ENCODE measurements at regions of chr12 and their contacts with region 1.

Region 1: GRCh38 chr12:6607751-6608591 is 792 bp upstream of the CHD4 start:
- DNase-seq: peak; percentile 64
- H3K4me3 ChIP-seq: no peak overlapping the region
- H3K27ac ChIP-seq: peak overlapping the region; percentile 57
- H3K4me1 ChIP-seq: peaks cover 56% of the 10 kb centered on the region
- CTCF ChIP-seq: no peak

Region 2: GRCh38 chr12:6570264-6570887 is 37.6 kb before region 1 on chr12:
- CTCF ChIA-PET with region 1: no interaction called
- POLR2A ChIA-PET with region 1: interaction called, 7 read pairs
- intact Hi-C with region 1: loop called (anchors 2 kb)
- DNase-seq: peak; percentile 69
- H3K4me3 ChIP-seq: no peak overlapping the region
- H3K27ac ChIP-seq: no peak overlapping the region
- H3K4me1 ChIP-seq: peaks cover 21% of the 10 kb centered on the region
- CTCF ChIP-seq: peak; percentile 94

Measured in OCI-LY7 (cell line).